AG04450 (cell line): ENCODE measurements at regions of chr2 and their contacts with region 1.

Region 1: GRCh38 chr2:201118121-201118960 is 2.4 kb downstream of the CFLAR start:
- DNase-seq: peak; percentile 37
- H3K4me3 ChIP-seq: peak overlapping the region; percentile 80
- H3K27ac ChIP-seq: peak overlapping the region; percentile 99
- H3K27me3 ChIP-seq: no peaks in the 10 kb centered on the region
- CTCF ChIP-seq: peak; percentile 51

Region 2: GRCh38 chr2:201130524-201131186 is 12.3 kb after region 1 on chr2:
- CTCF ChIA-PET with region 1: interaction called, 5 read pairs
- POLR2A ChIA-PET with region 1: interaction called, 17 read pairs
- DNase-seq: peak; percentile 48
- H3K4me3 ChIP-seq: no peak overlapping the region
- H3K27ac ChIP-seq: peak overlapping the region; percentile 95
- H3K27me3 ChIP-seq: no peaks in the 10 kb centered on the region
- CTCF ChIP-seq: no peak

Region 3: GRCh38 chr2:201158111-201158929 is 40.0 kb after region 1 on chr2:
- CTCF ChIA-PET with region 1: interaction called, 43 read pairs
- POLR2A ChIA-PET with region 1: interaction called, 8 read pairs
- DNase-seq: no peak
- H3K4me3 ChIP-seq: no peak overlapping the region
- H3K27ac ChIP-seq: peak overlapping the region; percentile 33
- H3K27me3 ChIP-seq: no peaks in the 10 kb centered on the region
- CTCF ChIP-seq: peak; percentile 83